Tibial artery (tissue), 4 donors: ENCODE measurements at regions of chr10 and their contacts with region 1.

Region 1: DNA sequence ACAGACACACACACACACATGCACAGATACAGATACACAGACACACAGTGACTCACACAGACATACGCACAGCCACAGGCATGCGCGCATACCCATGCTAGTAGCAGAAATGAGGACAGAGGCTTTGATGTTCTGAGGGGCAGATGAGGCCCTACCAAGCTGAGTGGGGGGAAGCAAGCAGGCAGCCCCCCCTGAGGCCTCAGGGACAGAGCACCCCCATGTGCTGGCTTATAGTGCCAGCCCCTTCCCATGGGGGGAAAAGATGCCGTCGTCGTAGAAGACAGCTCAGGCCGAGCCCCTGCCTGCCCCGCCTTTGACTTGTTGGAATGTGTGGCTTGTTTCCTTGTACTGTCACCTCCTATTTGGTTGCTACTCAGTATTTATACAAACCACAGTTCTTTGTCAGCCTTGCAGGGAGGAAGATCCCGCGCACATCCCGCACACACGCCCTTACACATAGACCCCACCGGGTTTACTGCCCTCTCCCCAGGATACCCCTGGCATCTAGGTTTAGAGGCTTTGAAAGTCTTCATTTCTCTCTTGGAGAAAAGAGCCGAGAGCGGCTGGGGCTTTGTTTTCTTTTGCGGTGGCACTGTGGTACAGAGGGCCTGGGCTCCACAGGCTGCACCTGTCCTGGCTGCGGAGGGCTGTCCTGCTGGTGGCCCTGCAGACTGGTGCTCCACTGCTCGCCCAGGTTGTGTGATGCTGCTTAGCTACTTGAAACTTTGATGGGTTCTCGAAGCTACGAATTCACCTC is 112.5 kb downstream of the DOCK1 start:
- DNase-seq: no peak
- H3K4me3 ChIP-seq: no peak overlapping the region
- H3K27ac ChIP-seq: no peak overlapping the region
- H3K4me1 ChIP-seq: peaks cover 0 to 13% (median 4%) of the 10 kb centered on the region in 4 donors
- H3K27me3 ChIP-seq: no peaks in the 10 kb centered on the region
- CTCF ChIP-seq: no peak

Region 2: GRCh38 chr10:126628746-126629145 is 389.0 kb before region 1 on chr10:
- intact Hi-C with region 1: loop called (anchors 5 kb)
- DNase-seq: no peak
- H3K4me3 ChIP-seq: no peak overlapping the region
- H3K27ac ChIP-seq: no peak overlapping the region
- H3K4me1 ChIP-seq: no peaks in the 10 kb centered on the region
- H3K27me3 ChIP-seq: peaks cover 0 to 4% of the 10 kb centered on the region in 2 donors
- CTCF ChIP-seq: no peak

Region 3: GRCh38 chr10:127117125-127117524 is 99.4 kb after region 1 on chr10:
- intact Hi-C with region 1: no loop called
- DNase-seq: peak in 1 of 2 donors; percentile 30
- H3K4me3 ChIP-seq: no peak overlapping the region
- H3K27ac ChIP-seq: no peak overlapping the region
- H3K4me1 ChIP-seq: no peaks in the 10 kb centered on the region
- H3K27me3 ChIP-seq: no peaks in the 10 kb centered on the region
- CTCF ChIP-seq: no peak